IMR-90 (cell line): ENCODE measurements at regions of chr2 and their contacts with region 1.

Region 1: DNA sequence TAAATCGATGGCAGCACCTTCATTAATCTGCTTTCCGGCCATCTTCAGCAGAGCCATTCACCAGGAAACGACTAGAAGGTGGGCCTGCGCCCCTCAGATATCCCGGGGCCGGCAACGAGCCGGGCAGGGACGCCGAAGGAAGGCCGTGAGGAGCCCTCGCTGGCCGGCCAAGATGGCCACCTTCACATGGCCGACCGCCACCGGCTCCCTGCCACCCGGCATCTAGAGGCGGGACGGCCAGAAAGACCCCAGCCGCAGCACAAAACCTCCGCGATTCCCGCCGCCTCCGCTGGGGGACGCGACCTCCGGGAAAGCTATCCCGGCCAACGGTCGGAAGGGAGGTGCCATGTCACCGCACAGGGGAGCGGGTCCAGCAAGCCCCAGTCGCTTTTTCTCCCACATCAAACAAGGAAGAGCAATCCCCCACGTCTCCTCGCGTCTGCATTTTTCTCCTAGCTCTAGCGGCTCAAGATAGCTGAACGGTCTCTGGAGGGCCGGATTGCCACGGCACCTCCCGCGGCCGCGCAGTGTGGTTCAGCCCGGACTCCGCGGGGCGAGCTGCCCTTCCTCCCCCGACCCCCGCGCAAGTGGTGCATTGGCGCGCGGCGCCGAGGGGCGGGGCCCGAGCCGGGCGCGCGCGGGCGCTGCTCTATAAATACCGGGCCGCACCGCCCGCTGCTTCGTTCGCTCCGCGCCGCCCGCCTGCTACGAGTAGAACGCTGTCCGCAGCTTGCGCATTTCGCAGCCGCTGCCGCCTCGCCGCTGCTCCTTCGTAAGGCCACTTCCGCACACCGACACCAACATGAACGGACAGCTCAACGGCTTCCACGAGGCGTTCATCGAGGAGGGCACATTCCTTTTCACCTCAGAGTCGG is at the start of gene MAT2A:
- DNase-seq: peak; percentile 90
- ATAC-seq: peak; percentile 85
- H3K4me3 ChIP-seq: peak within 1 kb of the TSS; percentile 78
- H3K27ac ChIP-seq: peak within 1 kb of the TSS; percentile 92
- H3K4me1 ChIP-seq: peaks cover 8% of the 10 kb centered on the region
- H3K27me3 ChIP-seq: no peaks in the 10 kb centered on the region
- CTCF ChIP-seq: peak; percentile 66
- POLR2A ChIP-seq: peak; percentile 100
- RAD21 ChIP-seq: peak; percentile 50
- total RNA-seq, gene MAT2A: 94.1 and 98.9 TPM in 2 replicates

Region 2: GRCh38 chr2:84865181-84865783 is 673.4 kb before region 1 on chr2:
- CTCF ChIA-PET with region 1: no interaction called
- POLR2A ChIA-PET with region 1: no interaction called
- dilution Hi-C with region 1: no loop called
- in situ Hi-C with region 1: no loop called
- intact Hi-C with region 1: no loop called
- DNase-seq: peak; percentile 43
- ATAC-seq: peak; percentile 63
- H3K4me3 ChIP-seq: no peak overlapping the region
- H3K27ac ChIP-seq: no peak overlapping the region
- H3K4me1 ChIP-seq: peaks cover 2% of the 10 kb centered on the region; the same call in 1 of the 2 replicates
- H3K27me3 ChIP-seq: no peaks in the 10 kb centered on the region
- CTCF ChIP-seq: peak; percentile 43; the same call in 1 of the 2 replicates
- POLR2A ChIP-seq: no peak
- RAD21 ChIP-seq: peak; percentile 57

Region 3: DNA sequence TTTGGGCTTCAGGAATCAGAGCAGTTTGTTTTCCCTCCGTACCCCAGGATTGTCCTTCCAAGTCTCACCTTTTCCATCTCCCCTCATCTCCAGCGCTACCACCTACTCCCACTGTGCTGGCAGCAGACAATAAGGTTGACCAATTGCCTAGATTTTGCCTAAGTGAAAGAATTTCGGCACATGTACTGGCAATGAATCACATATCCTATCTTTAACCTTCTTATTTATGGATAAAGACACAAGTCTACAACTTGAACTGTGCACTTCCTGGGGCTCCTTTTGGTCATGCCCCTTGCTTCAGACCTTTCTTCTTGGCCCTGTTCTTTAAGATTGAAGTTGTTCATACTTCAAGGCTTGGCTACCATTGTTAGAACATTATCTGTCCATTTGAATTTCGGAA is 496.4 kb before region 1 on chr2:
- CTCF ChIA-PET with region 1: no interaction called
- POLR2A ChIA-PET with region 1: no interaction called
- dilution Hi-C with region 1: no loop called
- in situ Hi-C with region 1: no loop called
- intact Hi-C with region 1: no loop called
- DNase-seq: no peak
- ATAC-seq: peak; percentile 62
- H3K4me3 ChIP-seq: no peak overlapping the region
- H3K27ac ChIP-seq: no peak overlapping the region
- H3K4me1 ChIP-seq: peaks cover 4% of the 10 kb centered on the region
- H3K27me3 ChIP-seq: no peaks in the 10 kb centered on the region
- CTCF ChIP-seq: no peak
- POLR2A ChIP-seq: no peak
- RAD21 ChIP-seq: no peak

Region 4: GRCh38 chr2:85066874-85067351 is 471.8 kb before region 1 on chr2:
- CTCF ChIA-PET with region 1: no interaction called
- POLR2A ChIA-PET with region 1: no interaction called
- dilution Hi-C with region 1: no loop called
- in situ Hi-C with region 1: no loop called
- intact Hi-C with region 1: loop called (anchors 10 kb)
- DNase-seq: peak; percentile 84
- ATAC-seq: peak; percentile 96
- H3K4me3 ChIP-seq: peak overlapping the region; percentile 27; the same call in 1 of the 2 replicates
- H3K27ac ChIP-seq: no peak overlapping the region
- H3K4me1 ChIP-seq: no peaks in the 10 kb centered on the region
- H3K27me3 ChIP-seq: peaks cover 6% of the 10 kb centered on the region; the same call in 1 of the 2 replicates
- CTCF ChIP-seq: peak; percentile 88
- POLR2A ChIP-seq: 0 out of 2 replicates have a peak, but pooled peaks have one; percentile 32
- RAD21 ChIP-seq: peak; percentile 92

Region 5: GRCh38 chr2:85428343-85428881 is 110.3 kb before region 1 on chr2:
- CTCF ChIA-PET with region 1: interaction called, 7 read pairs
- POLR2A ChIA-PET with region 1: interaction called, 17 read pairs
- dilution Hi-C with region 1: no loop called
- in situ Hi-C with region 1: no loop called
- intact Hi-C with region 1: loop called (anchors 2 kb)
- DNase-seq: no peak
- ATAC-seq: no peak
- H3K4me3 ChIP-seq: no peak overlapping the region
- H3K27ac ChIP-seq: no peak overlapping the region
- H3K4me1 ChIP-seq: peaks cover 11% of the 10 kb centered on the region
- H3K27me3 ChIP-seq: no peaks in the 10 kb centered on the region
- CTCF ChIP-seq: no peak
- POLR2A ChIP-seq: no peak
- RAD21 ChIP-seq: no peak

Region 6: GRCh38 chr2:85496436-85496835 is 42.3 kb before region 1 on chr2:
- CTCF ChIA-PET with region 1: no interaction called
- POLR2A ChIA-PET with region 1: interaction called, 6 read pairs
- dilution Hi-C with region 1: no loop called
- in situ Hi-C with region 1: no loop called
- intact Hi-C with region 1: loop called (anchors 5 kb)
- DNase-seq: no peak
- ATAC-seq: no peak
- H3K4me3 ChIP-seq: no peak overlapping the region
- H3K27ac ChIP-seq: no peak overlapping the region
- H3K4me1 ChIP-seq: peaks cover 4% of the 10 kb centered on the region; the same call in 1 of the 2 replicates
- H3K27me3 ChIP-seq: no peaks in the 10 kb centered on the region
- CTCF ChIP-seq: no peak
- POLR2A ChIP-seq: no peak
- RAD21 ChIP-seq: no peak

Region 7: DNA sequence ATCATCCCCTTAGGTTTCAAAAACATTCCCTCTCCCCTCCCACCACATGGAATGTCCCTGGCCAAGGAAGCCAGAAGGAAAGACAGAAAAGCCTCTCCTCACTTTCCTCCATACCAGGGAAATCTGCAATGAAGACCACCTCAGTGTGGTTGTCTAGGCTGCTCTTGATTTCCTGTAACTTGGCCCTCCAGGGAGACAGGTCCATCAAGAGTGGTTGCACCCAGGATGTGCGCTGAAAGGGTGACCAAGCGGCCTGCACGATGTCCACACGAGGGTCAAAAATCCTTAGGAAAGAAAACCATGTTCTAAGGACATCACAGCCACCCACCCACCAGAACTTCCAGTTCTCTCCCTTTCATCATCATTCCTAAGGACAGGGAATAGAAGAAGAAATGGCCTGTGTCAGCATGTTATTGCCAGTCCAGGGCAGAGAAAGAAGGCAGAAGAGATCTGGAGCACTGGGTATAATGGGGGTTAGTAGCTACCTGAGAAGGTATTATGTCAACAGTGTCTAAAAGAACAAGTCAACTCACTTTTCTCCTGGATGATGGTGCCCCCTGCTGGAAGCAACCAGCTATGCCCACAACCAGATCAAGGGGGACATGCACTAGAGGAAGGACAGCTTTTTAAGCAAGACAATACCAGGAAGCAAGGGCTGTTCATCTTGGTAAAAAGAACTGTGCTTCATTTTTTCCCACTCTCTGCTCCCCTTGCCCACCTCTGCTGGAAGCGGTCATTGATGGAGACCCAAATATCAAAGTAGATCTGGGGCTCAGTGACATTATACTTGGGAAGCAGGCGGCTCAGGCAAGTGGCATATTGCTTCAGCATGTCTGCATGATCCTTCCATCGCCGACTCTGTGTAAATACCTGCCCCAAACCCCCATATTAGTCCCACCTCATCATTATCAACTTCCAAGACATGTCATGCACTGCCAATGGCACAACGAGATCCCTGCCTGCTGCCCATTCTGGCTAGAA is 13.3 kb after region 1 on chr2:
- CTCF ChIA-PET with region 1: interaction called, 4 read pairs
- POLR2A ChIA-PET with region 1: interaction called, 42 read pairs
- dilution Hi-C with region 1: no loop called
- in situ Hi-C with region 1: no loop called
- intact Hi-C with region 1: no loop called
- DNase-seq: peak; percentile 74
- ATAC-seq: peak; percentile 24; the same call in 1 of the 2 replicates
- H3K4me3 ChIP-seq: no peak overlapping the region
- H3K27ac ChIP-seq: peak overlapping the region; percentile 98; the same call in 1 of the 2 replicates
- H3K4me1 ChIP-seq: peaks cover 18% of the 10 kb centered on the region
- H3K27me3 ChIP-seq: no peaks in the 10 kb centered on the region
- CTCF ChIP-seq: peak; percentile 89
- POLR2A ChIP-seq: 0 out of 2 replicates have a peak, but pooled peaks have one; percentile 23
- RAD21 ChIP-seq: peak; percentile 95

Region 8: GRCh38 chr2:85584857-85585783 is 46.4 kb after region 1 on chr2:
- CTCF ChIA-PET with region 1: no interaction called
- POLR2A ChIA-PET with region 1: no interaction called
- dilution Hi-C with region 1: no loop called
- in situ Hi-C with region 1: no loop called
- intact Hi-C with region 1: no loop called
- DNase-seq: peak; percentile 63
- ATAC-seq: peak; percentile 69
- H3K4me3 ChIP-seq: peak overlapping the region; percentile 50
- H3K27ac ChIP-seq: peak overlapping the region; percentile 90
- H3K4me1 ChIP-seq: peaks cover 26% of the 10 kb centered on the region
- H3K27me3 ChIP-seq: no peaks in the 10 kb centered on the region
- CTCF ChIP-seq: no peak
- POLR2A ChIP-seq: no peak
- RAD21 ChIP-seq: no peak